Naive thymus-derived CD4-positive, alpha-beta T cell (primary cell): ENCODE measurements at regions of chr16 and their contacts with region 1.

Region 1: GRCh38 chr16:2267913-2268666 is at the start of gene RNPS1:
- DNase-seq: peak; percentile 93 to 98 (median 96)
- ATAC-seq: peak; percentile 92
- H3K4me3 ChIP-seq: peak within 1 kb of the TSS; percentile 99
- H3K4me3 Mint-ChIP-seq: peak within 1 kb of the TSS; percentile 93 to 98 (median 95)
- H3K27ac ChIP-seq: peak within 1 kb of the TSS; percentile 91
- H3K27ac Mint-ChIP-seq: peak within 1 kb of the TSS; percentile 95 to 99 (median 98)
- H3K4me1 ChIP-seq: peaks cover 13 to 15% of the 10 kb centered on the region in 2 donors
- H3K4me1 Mint-ChIP-seq: peaks cover 15 to 42% (median 35%) of the 10 kb centered on the region in 7 donors
- H3K27me3 ChIP-seq: no peaks in the 10 kb centered on the region
- H3K27me3 Mint-ChIP-seq: peaks cover 0 to 2% (median 0%) of the 10 kb centered on the region in 5 donors
- total RNA-seq, gene RNPS1: 136 to 250 (median 220) TPM

Region 2: DNA sequence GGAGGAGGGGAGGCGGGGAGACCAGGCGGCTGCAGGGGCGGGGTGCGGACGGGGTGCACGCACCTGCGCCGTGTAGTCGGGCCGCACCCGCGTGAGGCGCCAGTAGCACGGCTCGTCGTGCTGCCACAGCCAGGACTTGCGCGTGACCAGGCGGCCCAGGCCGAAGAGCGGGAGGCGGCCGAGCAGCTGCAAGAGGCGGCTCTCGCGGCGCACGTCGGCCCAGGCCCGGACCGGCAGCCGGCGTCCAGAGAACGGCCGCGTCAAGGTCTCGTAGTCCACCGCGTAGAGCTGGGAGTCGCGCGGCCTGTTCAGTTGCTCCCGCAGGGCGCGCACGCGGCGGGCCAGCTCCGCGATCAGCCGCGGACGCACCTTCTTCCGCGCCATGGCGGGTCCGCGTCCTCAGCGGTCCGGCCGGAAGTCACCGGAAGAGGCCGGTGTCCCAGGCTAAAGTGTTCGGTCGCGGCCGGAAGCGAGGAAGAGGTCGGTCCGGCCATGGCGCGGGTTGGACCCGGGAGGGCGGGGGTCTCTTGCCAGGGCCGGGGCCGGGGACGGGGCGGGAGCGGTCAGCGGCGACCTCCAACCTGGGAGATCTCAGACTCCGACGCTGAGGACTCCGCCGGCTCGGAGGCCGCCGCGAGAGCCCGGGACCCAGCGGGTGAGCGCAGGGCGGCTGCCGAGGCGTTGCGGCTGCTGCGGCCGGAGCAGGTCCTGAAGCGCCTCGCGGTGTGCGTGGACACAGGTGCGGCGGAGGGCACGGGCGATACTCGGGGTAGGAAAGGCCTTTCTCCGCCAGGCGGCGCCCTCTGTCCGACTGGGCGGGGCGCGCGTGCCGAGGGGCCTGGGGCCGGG is 495.1 kb before region 1 on chr16 and contains the starts of genes EME2 and MRPS34:
- CTCF ChIA-PET with region 1: no interaction called
- POLR2A ChIA-PET with region 1: no interaction called
- intact Hi-C with region 1: loop called in 1 of 2 experiments (anchors 5 kb)
- DNase-seq: peak; percentile 61 to 88 (median 73)
- ATAC-seq: peak; percentile 76
- H3K4me3 ChIP-seq: peak within 1 kb of the TSS; percentile 70
- H3K4me3 Mint-ChIP-seq: peak within 1 kb of the TSS; percentile 91 to 99 (median 98)
- H3K27ac ChIP-seq: peak within 1 kb of the TSS; percentile 85
- H3K27ac Mint-ChIP-seq: peak within 1 kb of the TSS; percentile 86 to 98 (median 95)
- H3K4me1 ChIP-seq: peaks cover 13 to 26% of the 10 kb centered on the region in 2 donors
- H3K4me1 Mint-ChIP-seq: peaks cover 8 to 23% (median 12%) of the 10 kb centered on the region in 7 donors
- H3K27me3 ChIP-seq: no peaks in the 10 kb centered on the region
- H3K27me3 Mint-ChIP-seq: peaks cover 0 to 2% (median 0%) of the 10 kb centered on the region in 5 donors
- total RNA-seq, gene EME2: 32.2 to 47.5 (median 36.8) TPM
- total RNA-seq, gene MRPS34: 41.6 to 115 (median 49.5) TPM

Region 3: GRCh38 chr16:2213817-2214720 is 54.0 kb before region 1 on chr16:
- CTCF ChIA-PET with region 1: interaction called, 4 read pairs
- POLR2A ChIA-PET with region 1: interaction called, 4 read pairs
- intact Hi-C with region 1: loop called (anchors 2 to 10 kb)
- DNase-seq: peak in 1 of 9 donors; percentile 60
- ATAC-seq: no peak
- H3K4me3 ChIP-seq: peak overlapping the region; percentile 65
- H3K4me3 Mint-ChIP-seq: peak overlapping the region; percentile 65 to 88 (median 79)
- H3K27ac ChIP-seq: peak overlapping the region; percentile 73
- H3K27ac Mint-ChIP-seq: peak overlapping the region in 3 of 9 donors; percentile 68 to 79 (median 71)
- H3K4me1 ChIP-seq: peaks cover 14 to 16% of the 10 kb centered on the region in 2 donors
- H3K4me1 Mint-ChIP-seq: peaks cover 11 to 21% (median 17%) of the 10 kb centered on the region in 7 donors
- H3K27me3 ChIP-seq: no peaks in the 10 kb centered on the region
- H3K27me3 Mint-ChIP-seq: no peaks in the 10 kb centered on the region

Region 4: GRCh38 chr16:2340564-2341455 is 72.7 kb after region 1 on chr16 and contains the start of gene ABCA3:
- CTCF ChIA-PET with region 1: interaction called, 3 read pairs
- POLR2A ChIA-PET with region 1: no interaction called
- intact Hi-C with region 1: loop called (anchors 1 kb)
- DNase-seq: peak; percentile 85 to 100 (median 93)
- ATAC-seq: peak; percentile 96
- H3K4me3 ChIP-seq: peak within 1 kb of the TSS; percentile 62
- H3K4me3 Mint-ChIP-seq: peak within 1 kb of the TSS; percentile 78 to 91 (median 86)
- H3K27ac ChIP-seq: peak within 1 kb of the TSS; percentile 15
- H3K27ac Mint-ChIP-seq: peak within 1 kb of the TSS in 7 of 9 donors; percentile 31 to 82 (median 64)
- H3K4me1 ChIP-seq: peaks cover 6 to 9% of the 10 kb centered on the region in 2 donors
- H3K4me1 Mint-ChIP-seq: peaks cover 9 to 19% (median 16%) of the 10 kb centered on the region in 7 donors
- H3K27me3 ChIP-seq: no peaks in the 10 kb centered on the region
- H3K27me3 Mint-ChIP-seq: peaks cover 0 to 40% (median 0%) of the 10 kb centered on the region in 5 donors
- total RNA-seq, gene ABCA3: 7.0 to 10.0 (median 8.1) TPM

Region 5: DNA sequence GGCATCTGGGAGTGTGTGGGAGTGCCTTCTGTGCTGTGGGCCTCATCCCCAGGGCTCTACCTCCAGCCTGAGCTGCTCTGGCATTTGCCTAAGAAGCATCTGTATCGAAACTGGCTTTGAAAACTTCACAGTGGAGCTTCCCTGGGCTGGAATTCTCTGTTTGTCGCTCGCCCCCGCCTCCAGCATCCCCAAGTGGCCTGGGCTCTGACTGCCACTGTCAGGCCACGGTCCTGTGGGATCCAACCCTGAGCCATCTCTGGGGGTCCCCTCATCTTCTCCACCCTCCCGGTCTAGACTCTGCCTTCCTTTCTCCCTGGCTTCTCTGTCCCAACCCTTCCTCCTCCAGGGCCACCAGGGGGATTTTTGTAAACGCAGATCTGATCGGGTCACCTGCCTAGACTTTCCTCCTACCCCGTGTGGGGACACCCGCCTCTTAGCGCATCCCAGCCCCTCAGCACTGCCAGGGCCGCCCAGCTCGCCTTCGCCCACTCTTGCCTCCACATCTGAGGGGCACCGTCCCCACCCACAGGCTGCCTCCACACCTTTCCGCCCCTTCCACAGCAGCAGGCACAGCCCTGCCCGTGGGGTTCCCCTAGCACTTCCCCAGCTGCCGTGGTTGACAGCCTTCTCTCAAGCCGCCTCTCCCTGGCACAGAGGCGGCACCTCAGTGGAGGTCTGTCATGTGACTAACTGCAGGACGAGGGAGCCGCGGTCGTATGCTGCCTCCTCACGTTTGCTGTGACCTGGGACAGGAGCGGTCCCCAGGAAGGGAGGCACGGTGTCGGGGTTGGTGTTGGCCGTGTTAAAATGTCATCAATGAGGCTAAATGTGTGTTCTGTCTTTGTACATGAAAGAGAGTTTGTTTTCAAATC is 218.8 kb after region 1 on chr16:
- CTCF ChIA-PET with region 1: interaction called, 3 read pairs
- POLR2A ChIA-PET with region 1: no interaction called
- intact Hi-C with region 1: loop called in 1 of 2 experiments (anchors 1 kb)
- DNase-seq: peak; percentile 54 to 86 (median 80)
- ATAC-seq: peak; percentile 96
- H3K4me3 ChIP-seq: no peak overlapping the region
- H3K4me3 Mint-ChIP-seq: peak overlapping the region; percentile 39 to 76 (median 56)
- H3K27ac ChIP-seq: peak overlapping the region; percentile 24
- H3K27ac Mint-ChIP-seq: peak overlapping the region; percentile 25 to 94 (median 75)
- H3K4me1 ChIP-seq: peaks cover 10 to 15% of the 10 kb centered on the region in 2 donors
- H3K4me1 Mint-ChIP-seq: peaks cover 11 to 23% (median 13%) of the 10 kb centered on the region in 7 donors
- H3K27me3 ChIP-seq: no peaks in the 10 kb centered on the region
- H3K27me3 Mint-ChIP-seq: no peaks in the 10 kb centered on the region

Region 6: DNA sequence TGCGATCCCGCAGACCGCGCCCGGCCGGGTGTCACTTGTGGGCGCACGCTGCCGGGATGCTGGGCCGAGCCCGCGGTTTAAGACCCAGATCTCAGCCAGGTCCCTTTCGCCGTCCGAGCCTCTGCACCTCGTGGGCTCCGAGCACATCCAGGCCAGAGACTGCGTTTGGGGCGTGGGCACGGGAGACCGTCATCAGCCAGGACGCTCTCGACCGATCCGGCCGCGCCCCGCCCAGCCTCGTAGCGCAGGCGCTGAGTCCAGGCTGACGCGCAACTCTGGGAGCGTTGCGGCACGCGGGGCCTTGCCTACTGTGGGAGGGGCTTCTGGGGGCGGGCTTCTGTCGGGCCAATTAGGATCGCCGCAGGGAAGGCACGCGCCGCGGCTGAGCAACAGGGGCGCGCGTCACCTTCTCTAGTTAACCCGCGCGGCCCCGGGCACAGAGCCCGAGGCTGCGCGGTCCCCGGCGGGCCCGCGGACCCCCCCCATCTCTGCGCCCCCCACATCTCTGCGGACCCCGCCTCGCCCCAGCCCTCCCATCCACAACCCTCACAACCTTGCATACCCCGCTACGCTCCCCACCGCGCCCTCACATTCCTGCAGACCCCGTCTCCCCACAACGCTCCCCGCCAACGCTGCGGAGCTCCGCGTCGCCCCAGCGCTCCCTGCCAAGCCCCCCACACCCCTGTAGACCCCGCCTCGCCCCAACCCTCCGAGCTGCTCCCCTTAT is 263.8 kb after region 1 on chr16:
- CTCF ChIA-PET with region 1: no interaction called
- POLR2A ChIA-PET with region 1: interaction called, 3 read pairs
- intact Hi-C with region 1: loop called in 1 of 2 experiments (anchors 1 kb)
- DNase-seq: peak; percentile 94 to 97 (median 96)
- ATAC-seq: peak; percentile 93
- H3K4me3 ChIP-seq: peak overlapping the region; percentile 71
- H3K4me3 Mint-ChIP-seq: peak overlapping the region; percentile 84 to 100 (median 96)
- H3K27ac ChIP-seq: peak overlapping the region; percentile 93
- H3K27ac Mint-ChIP-seq: peak overlapping the region; percentile 96 to 100 (median 98)
- H3K4me1 ChIP-seq: peaks cover 5 to 7% of the 10 kb centered on the region in 2 donors
- H3K4me1 Mint-ChIP-seq: peaks cover 0 to 31% (median 20%) of the 10 kb centered on the region in 7 donors
- H3K27me3 ChIP-seq: no peaks in the 10 kb centered on the region
- H3K27me3 Mint-ChIP-seq: no peaks in the 10 kb centered on the region